PC-3 (cell line): ENCODE measurements at regions of chr6 and their contacts with region 1.

Region 1: DNA sequence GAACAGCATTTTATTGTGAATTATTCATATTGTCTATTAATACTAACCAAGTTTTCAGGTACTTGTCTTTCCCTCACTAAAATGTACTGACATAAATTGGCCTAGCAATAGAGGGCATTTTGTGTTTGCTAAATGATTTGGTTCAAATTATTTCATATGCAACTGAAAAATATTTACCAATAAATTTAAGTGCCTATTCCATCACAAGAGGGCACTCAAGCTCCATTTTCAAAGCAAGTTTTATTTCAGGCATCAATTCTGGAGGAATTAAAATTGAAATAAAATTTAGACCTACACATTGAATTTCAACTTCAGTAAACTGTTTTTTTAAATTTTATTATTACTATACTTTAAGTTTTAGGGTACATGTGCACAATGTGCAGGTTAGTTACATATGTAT is 114.3 kb upstream of the SYNCRIP start:
- DNase-seq: peak; percentile 59
- ATAC-seq: no peak
- H3K4me3 ChIP-seq: no peak overlapping the region
- H3K27ac ChIP-seq: no peak overlapping the region
- H3K4me1 ChIP-seq: no peaks in the 10 kb centered on the region
- H3K27me3 ChIP-seq: no peaks in the 10 kb centered on the region
- CTCF ChIP-seq: peak; percentile 60

Region 2: GRCh38 chr6:85911067-85911466 is 154.1 kb after region 1 on chr6:
- CTCF ChIA-PET with region 1: no interaction called
- POLR2A ChIA-PET with region 1: no interaction called
- intact Hi-C with region 1: no loop called
- DNase-seq: no peak
- ATAC-seq: no peak
- H3K4me3 ChIP-seq: no peak overlapping the region
- H3K27ac ChIP-seq: no peak overlapping the region
- H3K4me1 ChIP-seq: no peaks in the 10 kb centered on the region
- H3K27me3 ChIP-seq: no peaks in the 10 kb centered on the region
- CTCF ChIP-seq: no peak

Region 3: GRCh38 chr6:86192123-86192522 is 435.1 kb after region 1 on chr6:
- CTCF ChIA-PET with region 1: no interaction called
- POLR2A ChIA-PET with region 1: no interaction called
- intact Hi-C with region 1: loop called (anchors 5 kb)
- DNase-seq: peak; percentile 42
- ATAC-seq: peak; percentile 63; the same call in 1 of the 2 replicates
- H3K4me3 ChIP-seq: no peak overlapping the region
- H3K27ac ChIP-seq: no peak overlapping the region
- H3K4me1 ChIP-seq: no peaks in the 10 kb centered on the region
- H3K27me3 ChIP-seq: no peaks in the 10 kb centered on the region
- CTCF ChIP-seq: peak; percentile 58

Region 4: DNA sequence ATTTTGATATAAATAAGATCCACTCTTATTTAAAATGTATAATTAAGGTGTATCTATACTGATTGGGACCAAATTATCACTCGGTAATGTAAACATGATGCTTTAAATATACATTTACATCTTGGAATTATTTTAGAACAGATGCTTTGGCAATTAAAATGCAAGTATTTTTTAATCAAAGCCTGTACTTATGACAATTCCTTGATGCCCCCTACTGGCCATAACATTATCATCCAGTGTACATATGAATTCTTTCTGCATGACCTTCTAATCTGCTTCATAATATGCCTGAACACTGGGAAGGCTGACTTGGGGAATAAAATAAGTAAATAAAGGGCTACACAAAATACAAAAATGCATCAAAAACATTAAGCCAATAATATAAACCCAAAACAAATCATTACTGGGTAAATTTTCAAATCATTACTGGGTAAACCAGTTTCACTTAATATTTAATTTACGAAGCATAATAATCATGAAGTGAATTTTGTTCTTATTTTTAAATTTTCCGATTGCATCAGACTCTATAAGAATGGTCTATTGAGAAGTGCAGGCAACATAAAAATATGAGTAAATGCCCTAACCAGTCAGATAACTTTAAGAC is 1272.8 kb after region 1 on chr6:
- CTCF ChIA-PET with region 1: no interaction called
- POLR2A ChIA-PET with region 1: no interaction called
- intact Hi-C with region 1: loop called (anchors 5 kb)
- DNase-seq: peak; percentile 53
- ATAC-seq: peak; percentile 63
- H3K4me3 ChIP-seq: no peak overlapping the region
- H3K27ac ChIP-seq: no peak overlapping the region
- H3K4me1 ChIP-seq: no peaks in the 10 kb centered on the region
- H3K27me3 ChIP-seq: no peaks in the 10 kb centered on the region
- CTCF ChIP-seq: peak; percentile 71